Left cardiac atrium (tissue), 4 donors: ENCODE measurements at regions of chr3 and their contacts with region 1.

Region 1: DNA sequence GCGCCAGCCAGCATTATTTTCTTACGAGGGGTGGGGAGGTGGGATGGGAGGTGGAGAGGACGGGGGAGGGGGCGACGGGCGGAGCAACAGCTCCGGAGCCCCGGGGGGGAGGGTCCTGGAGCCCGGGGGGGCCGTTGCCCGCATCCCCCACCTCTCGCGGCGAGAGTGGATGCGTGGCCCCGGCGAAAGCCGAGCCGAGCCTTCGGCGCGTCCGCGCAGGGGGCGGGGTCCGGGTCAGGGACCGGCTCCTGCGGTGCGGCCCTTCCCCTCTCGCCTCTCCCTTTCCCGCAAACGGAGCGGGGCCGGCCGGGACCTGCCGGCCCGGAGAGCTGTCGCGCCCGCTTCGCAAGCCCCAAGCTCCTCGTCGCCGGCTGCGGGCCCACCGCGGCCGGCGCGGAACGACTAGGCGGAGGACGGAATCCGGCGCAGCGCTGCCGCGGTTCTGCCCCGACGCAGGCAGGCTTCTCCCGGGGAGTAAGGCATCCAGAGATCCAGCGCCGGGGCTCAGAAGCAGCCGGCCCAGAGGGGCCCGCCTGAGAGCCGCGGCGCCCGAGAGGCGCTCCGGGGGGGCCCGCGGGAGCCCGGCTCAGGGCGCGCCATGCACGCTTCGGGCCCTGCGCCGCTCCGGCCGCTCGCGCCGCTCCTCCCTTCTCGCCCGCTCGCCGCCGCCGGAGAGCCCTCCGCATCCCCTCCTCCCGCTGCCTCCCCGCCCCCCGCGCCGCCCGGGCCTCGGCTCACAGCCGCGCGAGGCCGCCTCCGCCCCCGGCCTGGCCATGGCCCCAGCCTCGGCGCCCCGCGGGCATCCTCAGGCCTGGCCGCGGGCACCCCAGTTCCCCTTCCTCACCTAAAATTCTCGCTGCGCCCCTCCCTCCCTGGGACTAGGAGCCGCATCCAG is 459 bp upstream of the ADCY5 start:
- DNase-seq: peak; percentile 48
- ATAC-seq: peak; percentile 68 to 73

Region 2: GRCh38 chr3:123218990-123219389 is 230.4 kb before region 1 on chr3:
- intact Hi-C with region 1: no loop called
- DNase-seq: no peak
- ATAC-seq: no peak

Region 3: DNA sequence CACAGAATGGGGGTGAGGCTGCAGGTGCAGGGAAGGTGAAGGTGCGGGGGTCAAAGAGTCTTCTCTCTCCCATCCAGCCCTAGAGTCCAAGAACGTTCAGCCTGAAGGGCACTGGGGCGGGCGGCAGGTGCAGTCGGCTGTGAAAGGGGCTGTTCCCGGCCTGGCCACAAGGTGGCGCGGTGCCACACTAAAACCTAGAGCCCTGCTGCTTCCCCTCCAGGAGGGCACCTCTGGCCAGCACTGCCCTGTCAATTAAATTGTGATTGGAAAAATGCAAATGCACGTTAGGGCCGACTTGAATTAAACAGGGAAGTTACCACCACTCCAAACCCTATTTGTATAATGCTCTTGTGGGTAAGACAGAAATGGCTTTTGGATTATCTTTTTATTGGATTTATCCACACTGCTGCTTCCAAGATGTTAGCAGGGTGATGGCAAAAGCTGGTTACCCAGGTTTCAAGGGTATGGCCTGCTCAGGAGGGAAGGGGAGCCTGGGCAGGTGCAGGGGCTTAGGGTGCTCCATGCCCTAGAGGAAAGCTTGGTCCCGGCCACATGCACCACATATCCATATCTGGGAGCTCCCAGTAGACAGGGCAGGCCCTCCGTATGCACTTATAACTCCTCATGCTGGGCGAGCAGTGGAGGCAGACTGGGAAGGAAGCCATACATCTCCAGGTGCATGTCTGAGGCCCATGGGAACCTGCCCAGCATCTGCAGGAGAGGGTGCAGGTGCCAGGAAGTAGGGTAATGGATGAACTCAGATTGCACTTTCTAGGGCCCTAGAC is 120.3 kb before region 1 on chr3:
- intact Hi-C with region 1: loop called (anchors 5 to 10 kb)
- DNase-seq: peak; percentile 76
- ATAC-seq: peak; percentile 48 to 59

Region 4: DNA sequence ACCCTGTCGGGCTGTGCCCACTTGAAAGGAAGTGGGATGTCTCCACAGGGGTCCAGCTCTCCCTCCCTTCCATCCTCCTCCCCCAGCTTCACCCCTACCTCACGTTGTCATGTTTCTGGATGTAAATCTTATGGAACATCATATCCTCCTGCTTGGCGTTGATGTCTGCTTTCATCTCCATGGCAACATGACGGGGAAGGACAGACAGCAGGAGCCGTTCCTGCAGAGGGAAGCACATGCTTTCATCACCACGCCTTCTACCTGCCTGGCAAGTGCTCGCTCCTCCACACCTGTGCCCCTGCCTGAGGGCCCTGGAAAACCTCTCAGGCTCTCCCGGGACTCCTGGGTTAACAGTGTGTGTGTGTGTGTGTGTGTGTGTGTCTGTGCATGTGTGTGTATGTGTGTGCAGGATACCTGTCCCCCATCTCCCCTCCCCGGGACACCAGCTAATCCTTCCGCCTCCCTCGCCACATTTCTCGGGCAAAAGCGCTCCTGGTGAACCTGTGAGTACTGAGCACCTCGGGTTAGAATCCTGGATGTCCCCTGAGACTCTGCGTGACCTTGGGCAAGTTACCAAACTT is 101.6 kb before region 1 on chr3:
- intact Hi-C with region 1: loop called in 1 of 2 experiments (anchors 5 kb)
- DNase-seq: no peak
- ATAC-seq: no peak

Region 5: GRCh38 chr3:123489400-123490004 is 40.2 kb after region 1 on chr3:
- intact Hi-C with region 1: loop called in 1 of 2 experiments (anchors 5 kb)
- DNase-seq: peak; percentile 63
- ATAC-seq: peak; percentile 76

Region 6: DNA sequence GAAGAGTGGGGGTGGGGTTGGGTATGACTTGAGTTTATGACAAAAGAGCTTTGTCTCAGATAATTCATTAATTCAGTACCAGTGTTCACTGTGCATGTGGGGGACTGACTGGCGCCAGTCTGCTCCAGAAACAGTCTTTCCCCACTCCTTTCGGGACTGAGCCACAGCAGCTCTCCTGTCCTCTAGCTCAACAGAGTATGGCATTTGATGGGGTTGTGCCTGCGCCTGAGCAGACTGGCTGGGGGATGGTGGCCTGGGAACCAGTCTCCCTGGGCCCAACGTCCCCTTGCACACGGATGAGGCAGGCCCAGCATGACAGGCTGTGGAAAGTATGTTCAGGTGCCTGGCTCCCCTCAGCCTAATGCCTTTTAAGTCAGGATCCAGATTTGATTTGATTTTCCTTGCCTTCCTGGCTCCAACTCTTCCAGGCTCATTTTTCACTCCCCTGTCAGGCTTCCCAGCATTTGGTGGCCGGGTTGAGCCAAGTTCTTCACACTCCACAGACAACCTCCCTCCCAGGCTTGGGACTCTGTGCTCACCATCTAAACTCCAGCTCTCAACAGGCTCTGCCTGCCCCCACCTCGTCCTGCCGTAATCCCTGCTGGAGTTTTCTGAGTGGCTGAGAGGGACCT is 329.8 kb after region 1 on chr3:
- intact Hi-C with region 1: no loop called
- DNase-seq: no peak
- ATAC-seq: no peak